HepG2 (cell line): ENCODE measurements at regions of chr2 and their contacts with region 1.

Region 1: DNA sequence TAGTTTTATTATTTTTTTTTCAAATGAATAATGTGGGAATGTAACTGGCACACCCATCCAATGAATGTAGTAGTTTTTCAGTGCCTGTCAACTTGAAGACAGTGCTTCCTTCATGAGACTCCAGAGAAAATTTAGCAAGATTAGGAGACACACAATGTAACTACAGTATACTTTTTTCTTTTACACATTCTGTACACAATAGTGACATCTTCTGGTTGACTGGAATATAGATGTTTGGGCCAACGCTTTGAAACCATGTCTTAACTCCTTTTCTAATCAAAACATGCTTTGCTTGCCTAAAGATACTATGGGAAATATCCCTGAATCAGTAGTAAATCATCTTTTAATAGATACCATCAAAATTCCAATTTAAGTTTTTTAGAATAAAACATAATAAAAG is 229.5 kb upstream of the ZC3H15 start:
- DNase-seq: peak; percentile 57
- ATAC-seq: peak; percentile 80
- H3K4me3 ChIP-seq: no peak overlapping the region
- H3K27ac ChIP-seq: no peak overlapping the region
- H3K4me1 ChIP-seq: no peaks in the 10 kb centered on the region
- H3K27me3 ChIP-seq: no peaks in the 10 kb centered on the region
- CTCF ChIP-seq: peak; percentile 82
- EP300 ChIP-seq: no peak
- POLR2A ChIP-seq: no peak
- RAD21 ChIP-seq: peak; percentile 79

Region 2: DNA sequence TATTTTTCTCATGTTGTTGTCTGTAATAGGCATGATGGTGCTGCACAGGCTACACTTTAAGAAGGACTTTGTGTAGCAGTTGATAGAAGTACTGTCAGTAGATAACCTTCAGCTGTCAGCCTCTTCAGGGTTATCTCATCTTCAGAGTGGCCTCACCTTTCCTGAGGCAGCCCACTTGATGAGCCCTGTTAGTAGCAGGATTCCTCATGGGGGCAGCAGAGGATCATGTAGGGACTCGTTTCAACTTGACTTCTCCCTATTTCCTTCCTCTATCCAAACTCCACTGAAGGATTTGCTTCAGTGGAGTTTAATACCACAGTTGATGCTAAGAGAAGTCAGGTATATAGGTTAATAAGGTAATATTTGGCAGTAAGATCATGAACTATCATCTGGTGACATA is 1048.3 kb before region 1 on chr2:
- CTCF ChIA-PET with region 1: no interaction called
- POLR2A ChIA-PET with region 1: no interaction called
- in situ Hi-C with region 1: no loop called
- intact Hi-C with region 1: loop called (anchors 2 kb)
- DNase-seq: peak; percentile 60
- ATAC-seq: peak; percentile 99
- H3K4me3 ChIP-seq: no peak overlapping the region
- H3K27ac ChIP-seq: no peak overlapping the region
- H3K4me1 ChIP-seq: no peaks in the 10 kb centered on the region
- H3K27me3 ChIP-seq: no peaks in the 10 kb centered on the region
- CTCF ChIP-seq: peak; percentile 82
- EP300 ChIP-seq: no peak
- POLR2A ChIP-seq: no peak
- RAD21 ChIP-seq: peak; percentile 60; the same call in 1 of the 2 replicates

Region 3: GRCh38 chr2:185522472-185522871 is 734.1 kb before region 1 on chr2:
- CTCF ChIA-PET with region 1: interaction called, 5 read pairs
- POLR2A ChIA-PET with region 1: no interaction called
- in situ Hi-C with region 1: no loop called
- intact Hi-C with region 1: loop called (anchors 1 kb)
- DNase-seq: peak; percentile 8
- ATAC-seq: no peak
- H3K4me3 ChIP-seq: no peak overlapping the region
- H3K27ac ChIP-seq: no peak overlapping the region
- H3K4me1 ChIP-seq: no peaks in the 10 kb centered on the region
- H3K27me3 ChIP-seq: no peaks in the 10 kb centered on the region
- CTCF ChIP-seq: peak; percentile 44
- EP300 ChIP-seq: no peak
- POLR2A ChIP-seq: no peak
- RAD21 ChIP-seq: no peak

Region 4: DNA sequence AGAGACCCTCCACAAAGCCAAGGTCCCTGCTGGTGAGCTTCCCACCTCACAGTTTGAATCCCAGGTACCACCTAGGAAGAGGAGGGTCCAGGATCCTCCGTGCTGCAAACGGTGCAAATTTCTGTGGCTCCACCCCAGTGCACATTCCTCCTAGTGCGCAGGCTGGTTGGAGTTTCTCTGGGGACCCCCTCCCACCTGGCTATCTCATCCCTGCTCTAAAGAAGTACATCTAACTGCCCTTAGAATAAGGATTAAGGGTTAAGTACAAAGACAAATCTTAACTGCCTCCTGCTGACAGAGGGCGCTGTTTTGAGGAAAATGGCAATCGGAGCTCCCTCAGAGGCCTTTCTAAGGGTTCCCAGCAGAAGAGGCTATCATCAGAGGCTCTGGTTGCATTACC is 627.6 kb before region 1 on chr2:
- CTCF ChIA-PET with region 1: interaction called, 13 read pairs
- POLR2A ChIA-PET with region 1: no interaction called
- in situ Hi-C with region 1: loop called (anchors 25 kb)
- intact Hi-C with region 1: loop called (anchors 1 kb)
- DNase-seq: peak; percentile 43
- ATAC-seq: peak; percentile 93
- H3K4me3 ChIP-seq: no peak overlapping the region
- H3K27ac ChIP-seq: no peak overlapping the region
- H3K4me1 ChIP-seq: no peaks in the 10 kb centered on the region
- H3K27me3 ChIP-seq: no peaks in the 10 kb centered on the region
- CTCF ChIP-seq: peak; percentile 73
- EP300 ChIP-seq: no peak
- POLR2A ChIP-seq: no peak
- RAD21 ChIP-seq: peak; percentile 41; the same call in 1 of the 2 replicates

Region 5: GRCh38 chr2:185955050-185955449 is 301.5 kb before region 1 on chr2:
- CTCF ChIA-PET with region 1: no interaction called
- POLR2A ChIA-PET with region 1: no interaction called
- in situ Hi-C with region 1: no loop called
- intact Hi-C with region 1: loop called (anchors 10 kb)
- DNase-seq: no peak
- ATAC-seq: no peak
- H3K4me3 ChIP-seq: no peak overlapping the region
- H3K27ac ChIP-seq: no peak overlapping the region
- H3K4me1 ChIP-seq: no peaks in the 10 kb centered on the region
- H3K27me3 ChIP-seq: no peaks in the 10 kb centered on the region
- CTCF ChIP-seq: no peak
- EP300 ChIP-seq: no peak
- POLR2A ChIP-seq: no peak
- RAD21 ChIP-seq: no peak

Region 6: DNA sequence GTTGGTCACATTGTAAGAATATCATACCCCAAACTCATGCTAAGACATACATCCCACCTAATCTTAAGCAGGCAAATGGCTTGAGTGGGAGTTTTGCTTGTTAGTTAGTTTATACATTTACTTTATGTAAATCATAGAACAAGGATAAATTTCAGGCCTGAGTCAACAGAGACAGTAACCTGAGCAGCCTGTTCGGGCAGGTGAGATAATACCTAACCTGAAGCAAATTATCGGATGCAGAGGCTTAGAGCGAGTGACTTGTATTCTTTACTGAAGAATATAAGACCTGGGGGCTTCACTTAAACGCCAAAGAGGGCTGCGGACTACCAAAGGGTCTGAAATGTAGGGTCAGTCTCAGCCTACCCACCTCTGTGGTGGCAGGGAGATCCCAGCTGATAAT is 40.0 kb before region 1 on chr2:
- CTCF ChIA-PET with region 1: no interaction called
- POLR2A ChIA-PET with region 1: no interaction called
- in situ Hi-C with region 1: no loop called
- intact Hi-C with region 1: no loop called
- DNase-seq: no peak
- ATAC-seq: no peak
- H3K4me3 ChIP-seq: no peak overlapping the region
- H3K27ac ChIP-seq: no peak overlapping the region
- H3K4me1 ChIP-seq: no peaks in the 10 kb centered on the region
- H3K27me3 ChIP-seq: no peaks in the 10 kb centered on the region
- CTCF ChIP-seq: no peak
- EP300 ChIP-seq: no peak
- POLR2A ChIP-seq: no peak
- RAD21 ChIP-seq: no peak